ENCODE measurements at regions of chr5 and their contacts with region 1.

Region 1: GRCh38 chr5:180810210-180810958 is 7.8 kb upstream of the MGAT1 start:
- DNase-seq: peak; percentile 96
- ATAC-seq: peak; percentile 79
- H3K4me3 Mint-ChIP-seq: peak overlapping the region; percentile 73
- H3K27ac Mint-ChIP-seq: peak overlapping the region; percentile 100
- H3K4me1 Mint-ChIP-seq: peaks cover 68% of the 10 kb centered on the region
- H3K27me3 Mint-ChIP-seq: no peaks in the 10 kb centered on the region

Region 2: GRCh38 chr5:180689071-180689694 is 121.2 kb before region 1 on chr5:
- CTCF ChIA-PET with region 1: no interaction called
- POLR2A ChIA-PET with region 1: no interaction called
- DNase-seq: peak; percentile 65
- ATAC-seq: peak; percentile 90
- H3K4me3 Mint-ChIP-seq: peak overlapping the region; percentile 65
- H3K27ac Mint-ChIP-seq: peak overlapping the region; percentile 86
- H3K4me1 Mint-ChIP-seq: peaks cover 31% of the 10 kb centered on the region
- H3K27me3 Mint-ChIP-seq: peaks cover 6% of the 10 kb centered on the region

Region 3: DNA sequence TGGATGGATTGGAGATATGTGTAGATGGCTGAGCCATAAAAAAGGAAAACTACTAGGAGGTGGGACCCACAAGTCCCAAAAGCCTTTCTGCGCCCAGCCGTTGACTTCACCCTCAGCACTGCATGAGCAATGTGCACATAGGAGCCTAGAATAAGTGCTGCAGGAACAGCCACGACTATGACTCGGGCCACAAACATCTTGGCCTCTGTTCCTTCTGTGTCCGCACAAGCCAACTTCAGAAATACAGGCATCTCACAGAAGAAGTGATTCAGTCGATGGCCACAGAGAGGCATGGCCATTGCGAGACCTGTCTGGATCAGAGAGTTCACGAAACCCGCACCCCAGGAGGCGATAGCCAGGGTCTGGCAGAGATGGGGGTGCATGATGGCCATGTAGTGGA is 71.1 kb before region 1 on chr5:
- CTCF ChIA-PET with region 1: no interaction called
- POLR2A ChIA-PET with region 1: no interaction called
- DNase-seq: no peak
- ATAC-seq: no peak
- H3K4me3 Mint-ChIP-seq: no peak overlapping the region
- H3K27ac Mint-ChIP-seq: no peak overlapping the region
- H3K4me1 Mint-ChIP-seq: no peaks in the 10 kb centered on the region
- H3K27me3 Mint-ChIP-seq: peaks cover 24% of the 10 kb centered on the region

Region 4: GRCh38 chr5:180860887-180861822 is 50.8 kb after region 1 on chr5 and contains the start of gene ZFP62:
- CTCF ChIA-PET with region 1: interaction called, 4 read pairs
- POLR2A ChIA-PET with region 1: interaction called, 10 read pairs
- DNase-seq: peak; percentile 90
- ATAC-seq: peak; percentile 85
- H3K4me3 Mint-ChIP-seq: peak within 1 kb of the TSS; percentile 87
- H3K27ac Mint-ChIP-seq: peak within 1 kb of the TSS; percentile 86
- H3K4me1 Mint-ChIP-seq: peaks cover 17% of the 10 kb centered on the region
- H3K27me3 Mint-ChIP-seq: peaks cover 2% of the 10 kb centered on the region
- total RNA-seq, gene ZFP62: 22.8 to 25.3 TPM